ENCODE measurements at regions of chr4 and their contacts with region 1.

Region 1: DNA sequence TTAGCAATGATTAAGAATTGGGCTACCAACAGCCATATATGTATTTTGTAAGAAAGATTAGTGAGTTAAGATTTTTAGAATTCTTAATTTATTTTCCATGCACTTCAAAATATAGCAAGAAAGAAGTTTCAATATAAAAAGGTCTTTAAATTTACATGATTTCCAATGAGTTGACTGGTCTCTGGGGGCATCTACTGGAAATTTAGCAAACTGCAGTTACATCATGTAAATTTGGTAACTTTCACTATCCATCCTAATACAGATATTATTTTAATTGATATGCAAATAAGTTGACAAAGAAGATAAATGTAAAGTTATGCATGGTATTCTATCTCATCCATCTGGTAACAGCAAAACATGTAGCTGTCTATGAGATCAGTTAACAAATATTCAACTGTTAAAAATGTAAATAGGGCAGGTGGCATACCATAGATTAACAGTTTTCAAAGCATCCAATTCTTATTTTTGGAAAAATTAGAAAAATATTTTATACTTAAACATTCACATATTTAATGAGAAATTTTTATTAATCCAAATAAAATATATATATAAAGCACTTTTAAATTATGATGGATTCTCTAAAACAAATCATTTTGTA is 29.1 kb downstream of the TTC29 start:
- DNase-seq: peak in 1 of 2 experiments; percentile 17
- H3K4me3 ChIP-seq: no peak overlapping the region
- H3K4me3 Mint-ChIP-seq: no peak overlapping the region
- H3K27ac Mint-ChIP-seq: no peak overlapping the region
- H3K4me1 ChIP-seq: no peaks in the 10 kb centered on the region
- H3K4me1 Mint-ChIP-seq: no peaks in the 10 kb centered on the region
- H3K27me3 ChIP-seq: no peaks in the 10 kb centered on the region
- H3K27me3 Mint-ChIP-seq: peaks cover 8% of the 10 kb centered on the region
- CTCF ChIP-seq: peak; percentile 59 to 62

Region 2: GRCh38 chr4:145956288-145956890 is 960.2 kb before region 1 on chr4:
- CTCF ChIA-PET with region 1: no interaction called
- POLR2A ChIA-PET with region 1: no interaction called
- intact Hi-C with region 1: loop called (anchors 10 kb)
- DNase-seq: peak in 1 of 2 experiments; percentile 52
- H3K4me3 ChIP-seq: no peak overlapping the region
- H3K4me3 Mint-ChIP-seq: no peak overlapping the region
- H3K27ac Mint-ChIP-seq: no peak overlapping the region
- H3K4me1 ChIP-seq: no peaks in the 10 kb centered on the region
- H3K4me1 Mint-ChIP-seq: no peaks in the 10 kb centered on the region
- H3K27me3 ChIP-seq: no peaks in the 10 kb centered on the region
- H3K27me3 Mint-ChIP-seq: peaks cover 12% of the 10 kb centered on the region
- CTCF ChIP-seq: peak; percentile 50 to 69

Region 3: GRCh38 chr4:146095091-146095690 is 821.4 kb before region 1 on chr4:
- CTCF ChIA-PET with region 1: no interaction called
- POLR2A ChIA-PET with region 1: no interaction called
- intact Hi-C with region 1: loop called (anchors 1 kb)
- DNase-seq: peak in 1 of 2 experiments; percentile 48
- H3K4me3 ChIP-seq: no peak overlapping the region
- H3K4me3 Mint-ChIP-seq: no peak overlapping the region
- H3K27ac Mint-ChIP-seq: no peak overlapping the region
- H3K4me1 ChIP-seq: no peaks in the 10 kb centered on the region
- H3K4me1 Mint-ChIP-seq: no peaks in the 10 kb centered on the region
- H3K27me3 ChIP-seq: no peaks in the 10 kb centered on the region
- H3K27me3 Mint-ChIP-seq: peaks cover 8% of the 10 kb centered on the region
- CTCF ChIP-seq: peak; percentile 62 to 65

Region 4: GRCh38 chr4:146342600-146343192 is 573.9 kb before region 1 on chr4:
- CTCF ChIA-PET with region 1: no interaction called
- POLR2A ChIA-PET with region 1: no interaction called
- intact Hi-C with region 1: loop called (anchors 2 kb)
- DNase-seq: peak in 1 of 2 experiments; percentile 39
- H3K4me3 ChIP-seq: no peak overlapping the region
- H3K4me3 Mint-ChIP-seq: no peak overlapping the region
- H3K27ac Mint-ChIP-seq: no peak overlapping the region
- H3K4me1 ChIP-seq: no peaks in the 10 kb centered on the region
- H3K4me1 Mint-ChIP-seq: no peaks in the 10 kb centered on the region
- H3K27me3 ChIP-seq: no peaks in the 10 kb centered on the region
- H3K27me3 Mint-ChIP-seq: no peaks in the 10 kb centered on the region
- CTCF ChIP-seq: peak; percentile 37 to 45

Region 5: GRCh38 chr4:146545102-146545501 is 371.5 kb before region 1 on chr4:
- CTCF ChIA-PET with region 1: no interaction called
- POLR2A ChIA-PET with region 1: no interaction called
- intact Hi-C with region 1: loop called (anchors 2 kb)
- DNase-seq: peak in 1 of 2 experiments; percentile 16
- H3K4me3 ChIP-seq: no peak overlapping the region
- H3K4me3 Mint-ChIP-seq: no peak overlapping the region
- H3K27ac Mint-ChIP-seq: no peak overlapping the region
- H3K4me1 ChIP-seq: no peaks in the 10 kb centered on the region
- H3K4me1 Mint-ChIP-seq: no peaks in the 10 kb centered on the region
- H3K27me3 ChIP-seq: no peaks in the 10 kb centered on the region
- H3K27me3 Mint-ChIP-seq: peaks cover 10% of the 10 kb centered on the region
- CTCF ChIP-seq: peak; percentile 16 to 39

Region 6: DNA sequence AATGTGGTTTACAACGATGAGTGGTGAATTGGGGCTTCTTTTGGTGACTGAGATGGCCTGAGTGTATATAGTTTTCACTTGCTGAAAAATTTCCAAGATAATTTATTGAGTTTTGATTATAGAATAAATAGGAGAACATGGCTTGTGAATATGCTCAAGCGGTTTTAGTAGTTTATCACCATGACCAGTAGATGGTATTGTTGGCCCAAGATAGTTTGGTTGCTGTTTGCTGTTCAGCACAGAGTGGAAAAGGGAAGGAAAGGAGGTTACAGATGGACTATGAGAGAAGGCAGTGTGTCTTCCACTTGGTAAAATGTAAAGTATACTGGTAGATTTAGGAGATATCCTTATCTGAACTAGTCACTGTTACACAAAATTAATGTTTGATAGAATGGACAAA is 333.7 kb before region 1 on chr4:
- CTCF ChIA-PET with region 1: no interaction called
- POLR2A ChIA-PET with region 1: no interaction called
- intact Hi-C with region 1: loop called (anchors 2 kb)
- DNase-seq: no peak
- H3K4me3 ChIP-seq: no peak overlapping the region
- H3K4me3 Mint-ChIP-seq: no peak overlapping the region
- H3K27ac Mint-ChIP-seq: no peak overlapping the region
- H3K4me1 ChIP-seq: no peaks in the 10 kb centered on the region
- H3K4me1 Mint-ChIP-seq: no peaks in the 10 kb centered on the region
- H3K27me3 ChIP-seq: no peaks in the 10 kb centered on the region
- H3K27me3 Mint-ChIP-seq: peaks cover 2% of the 10 kb centered on the region
- CTCF ChIP-seq: no peak

Region 7: GRCh38 chr4:147103403-147103946 is 186.9 kb after region 1 on chr4:
- CTCF ChIA-PET with region 1: no interaction called
- POLR2A ChIA-PET with region 1: no interaction called
- intact Hi-C with region 1: no loop called
- DNase-seq: no peak
- H3K4me3 ChIP-seq: no peak overlapping the region
- H3K4me3 Mint-ChIP-seq: no peak overlapping the region
- H3K27ac Mint-ChIP-seq: no peak overlapping the region
- H3K4me1 ChIP-seq: no peaks in the 10 kb centered on the region
- H3K4me1 Mint-ChIP-seq: no peaks in the 10 kb centered on the region
- H3K27me3 ChIP-seq: no peaks in the 10 kb centered on the region
- H3K27me3 Mint-ChIP-seq: peaks cover 6% of the 10 kb centered on the region
- CTCF ChIP-seq: no peak